ENCODE measurements at regions of chr15 and their contacts with region 1.

Region 1: DNA sequence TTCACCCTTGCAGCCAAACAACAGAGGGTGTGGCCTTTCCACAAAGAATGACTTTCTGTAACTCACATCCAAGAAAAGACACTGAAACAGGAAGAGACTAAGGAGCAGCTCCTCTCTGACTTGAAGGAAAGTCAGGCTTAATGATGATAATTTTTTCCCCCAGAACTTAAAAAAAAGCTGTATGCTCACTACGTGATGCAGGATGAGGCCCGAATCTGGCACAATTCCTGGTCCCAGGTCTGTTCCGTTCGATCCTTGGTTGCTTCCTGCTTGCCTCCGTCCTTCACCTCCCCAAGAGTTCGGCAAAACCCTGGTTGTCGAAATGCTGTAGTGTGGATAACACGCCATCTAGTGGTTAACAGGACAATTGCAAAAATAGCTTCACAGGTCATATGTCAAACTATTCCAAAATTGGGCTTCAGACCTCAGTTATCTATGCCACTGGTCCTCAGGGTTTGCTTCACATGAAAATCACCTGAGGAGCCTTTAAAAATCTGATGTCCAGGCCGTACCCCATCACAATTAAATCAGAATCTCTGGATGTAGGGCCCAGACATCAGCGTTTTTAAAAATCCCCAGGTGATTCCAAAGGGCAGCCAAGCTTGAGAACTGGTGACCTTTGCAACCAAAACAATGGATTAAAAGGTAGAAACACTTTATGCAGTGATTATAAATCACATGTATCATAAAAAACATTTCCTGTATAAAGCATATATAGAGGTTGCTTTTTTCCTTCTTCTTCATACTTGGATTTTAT is 28.1 kb upstream of the SYNM start:
- DNase-seq: peak; percentile 28
- H3K4me3 ChIP-seq: peak overlapping the region; percentile 41
- CTCF ChIP-seq: peak; percentile 73

Region 2: GRCh38 chr15:98513428-98513991 is 563.2 kb before region 1 on chr15:
- CTCF ChIA-PET with region 1: interaction called, 203 read pairs
- POLR2A ChIA-PET with region 1: no interaction called
- DNase-seq: no peak
- H3K4me3 ChIP-seq: no peak overlapping the region
- CTCF ChIP-seq: no peak

Region 3: GRCh38 chr15:98954411-98954810 is 122.3 kb before region 1 on chr15:
- CTCF ChIA-PET with region 1: interaction called, 14 read pairs
- POLR2A ChIA-PET with region 1: no interaction called
- DNase-seq: peak; percentile 87
- H3K4me3 ChIP-seq: no peak overlapping the region
- CTCF ChIP-seq: no peak

Region 4: GRCh38 chr15:99090011-99090699 is 13.4 kb after region 1 on chr15:
- CTCF ChIA-PET with region 1: interaction called, 27 read pairs
- POLR2A ChIA-PET with region 1: interaction called, 3 read pairs
- DNase-seq: no peak
- H3K4me3 ChIP-seq: no peak overlapping the region
- CTCF ChIP-seq: no peak